Natural killer cell (primary cell): ENCODE measurements at regions of chr13 and their contacts with region 1.

Region 1: DNA sequence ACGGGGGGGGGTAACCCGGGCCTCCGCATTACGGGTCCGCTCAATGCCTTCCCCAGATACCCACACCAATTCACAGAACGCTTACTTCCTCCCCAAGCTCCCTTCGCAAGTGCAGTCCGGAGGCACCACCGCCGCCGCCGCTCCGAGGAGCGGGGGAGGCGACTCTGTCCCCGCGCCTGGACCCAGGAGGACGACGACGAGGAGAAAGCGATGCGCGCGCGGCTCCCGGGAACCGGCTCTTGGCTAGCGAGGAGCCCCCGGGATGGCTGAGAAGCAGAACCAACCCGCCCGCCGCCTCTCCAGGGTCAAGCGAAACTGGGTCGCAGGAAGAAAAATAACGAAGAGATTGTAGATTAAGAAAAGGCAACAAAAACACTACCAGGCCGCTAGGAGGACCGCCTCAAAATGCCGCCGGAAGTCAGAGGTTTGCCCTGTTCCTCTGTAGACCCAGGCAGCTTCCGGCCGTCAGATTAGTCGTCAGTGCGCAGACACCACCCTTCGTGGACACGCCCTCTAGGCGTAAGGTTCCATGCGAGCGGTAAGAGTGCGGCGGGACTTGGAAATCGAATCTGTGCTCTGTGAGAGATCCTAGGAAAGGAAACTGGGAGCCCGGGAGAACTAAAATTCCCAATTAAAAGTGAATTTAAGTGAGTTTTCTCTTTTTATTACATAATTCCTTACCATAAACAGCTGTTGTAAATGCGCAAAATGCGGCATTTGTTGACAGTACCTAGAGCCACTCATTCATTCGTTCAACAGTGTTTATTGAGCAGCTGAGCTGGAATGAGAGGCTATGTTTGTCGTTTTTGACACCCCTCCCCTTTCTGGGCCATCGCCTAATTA is at the start of gene ZC3H13:
- DNase-seq: peak; percentile 85 to 97
- ATAC-seq: peak; percentile 96 to 100 (median 98)
- H3K4me3 ChIP-seq: peak within 1 kb of the TSS; percentile 94
- H3K4me3 Mint-ChIP-seq: peak within 1 kb of the TSS; percentile 87
- H3K27ac ChIP-seq: peak within 1 kb of the TSS; percentile 97
- H3K27ac Mint-ChIP-seq: peak within 1 kb of the TSS; percentile 97 to 98
- H3K4me1 ChIP-seq: peaks cover 4% of the 10 kb centered on the region
- H3K4me1 Mint-ChIP-seq: peaks cover 21 to 24% of the 10 kb centered on the region in 2 donors
- H3K27me3 ChIP-seq: peaks cover 5% of the 10 kb centered on the region
- H3K27me3 Mint-ChIP-seq: peaks cover 28 to 50% of the 10 kb centered on the region in 2 donors
- CTCF ChIP-seq: peak; percentile 41
- total RNA-seq, gene ZC3H13: 54.3 to 75.3 (median 65.8) TPM

Region 2: DNA sequence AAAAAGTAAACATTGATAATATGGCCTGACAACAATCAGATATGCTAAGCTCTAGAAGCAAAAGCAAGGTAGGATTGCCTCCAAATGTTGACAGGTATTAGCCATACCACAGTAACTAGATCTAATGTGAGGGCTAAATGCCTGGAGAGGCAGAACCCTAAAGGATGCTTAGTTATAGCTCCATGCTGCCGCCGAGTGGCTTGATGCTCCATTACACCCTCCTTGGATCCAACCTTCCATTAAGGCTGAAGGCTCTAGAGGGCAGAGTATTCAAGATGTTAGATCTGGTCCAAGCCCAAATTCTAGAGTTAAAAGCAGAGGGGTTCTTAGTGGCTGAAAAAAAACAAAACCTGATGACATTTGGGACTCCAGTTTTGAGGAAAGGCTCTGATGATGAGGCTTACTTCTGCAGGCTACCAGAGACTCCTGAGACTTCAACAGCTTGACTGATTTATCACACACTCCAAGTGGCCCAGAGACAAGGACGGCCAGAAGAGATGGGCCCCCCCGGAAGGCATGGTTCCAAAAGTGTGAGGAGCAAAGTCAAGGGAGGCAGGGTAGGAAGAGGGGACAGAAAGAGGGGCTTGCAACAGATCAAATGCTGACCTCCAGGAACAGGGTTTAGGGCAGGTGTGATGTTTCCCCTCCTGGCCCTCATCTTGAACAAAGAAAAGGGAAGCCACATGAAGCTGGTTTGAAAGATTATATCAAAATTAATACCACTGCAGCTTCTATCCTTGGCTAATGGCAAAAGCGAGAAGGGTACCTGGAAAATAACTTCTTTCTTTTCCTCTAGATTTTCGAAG is 74.2 kb after region 1 on chr13:
- intact Hi-C with region 1: loop called (anchors 1 kb)
- DNase-seq: peak; percentile 62 to 86
- ATAC-seq: peak; percentile 89 to 92 (median 91)
- H3K4me3 ChIP-seq: no peak overlapping the region
- H3K4me3 Mint-ChIP-seq: no peak overlapping the region
- H3K27ac ChIP-seq: peak overlapping the region; percentile 21
- H3K27ac Mint-ChIP-seq: peak overlapping the region; percentile 88 to 90
- H3K4me1 ChIP-seq: peaks cover 9% of the 10 kb centered on the region
- H3K4me1 Mint-ChIP-seq: peaks cover 51 to 55% of the 10 kb centered on the region in 2 donors
- H3K27me3 ChIP-seq: no peaks in the 10 kb centered on the region
- H3K27me3 Mint-ChIP-seq: no peaks in the 10 kb centered on the region
- CTCF ChIP-seq: peak; percentile 69

Region 3: DNA sequence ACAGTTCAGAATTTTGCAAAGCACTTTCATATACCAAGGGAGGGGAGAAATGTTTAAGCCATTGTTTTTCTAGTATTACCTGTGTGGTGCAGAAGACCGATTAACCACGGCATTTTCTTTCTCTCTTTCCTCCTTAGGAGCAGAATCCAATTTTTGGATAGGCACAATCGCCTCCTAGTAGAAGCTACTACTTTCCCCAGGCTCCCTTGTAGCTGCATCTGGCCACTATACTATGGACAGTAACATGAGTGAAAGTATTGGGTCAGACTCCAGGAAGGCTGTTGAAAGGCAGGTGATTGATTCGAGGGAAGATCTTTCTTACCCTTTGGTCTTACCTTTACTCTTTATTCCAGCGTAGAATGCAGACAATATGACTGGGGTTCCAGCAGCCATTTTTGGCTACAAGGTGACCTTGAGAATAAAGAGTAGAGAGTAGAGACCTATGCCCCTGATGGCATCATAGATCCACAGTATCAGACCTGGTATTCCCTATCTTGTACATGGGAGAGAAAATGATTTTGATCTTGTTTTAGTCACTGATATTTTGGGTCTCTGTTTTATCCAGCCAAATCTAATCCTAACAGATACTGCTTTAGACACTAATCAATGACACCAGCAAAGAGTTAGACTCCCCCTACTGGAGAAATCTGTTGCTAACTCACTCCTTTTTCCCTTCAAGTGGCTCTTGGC is 236.2 kb after region 1 on chr13:
- intact Hi-C with region 1: loop called (anchors 10 kb)
- DNase-seq: peak in 1 of 2 donors; percentile 80
- ATAC-seq: peak; percentile 72 to 87 (median 81)
- H3K4me3 ChIP-seq: no peak overlapping the region
- H3K4me3 Mint-ChIP-seq: no peak overlapping the region
- H3K27ac ChIP-seq: no peak overlapping the region
- H3K27ac Mint-ChIP-seq: no peak overlapping the region
- H3K4me1 ChIP-seq: no peaks in the 10 kb centered on the region
- H3K4me1 Mint-ChIP-seq: peaks cover 0 to 7% of the 10 kb centered on the region in 2 donors
- H3K27me3 ChIP-seq: no peaks in the 10 kb centered on the region
- H3K27me3 Mint-ChIP-seq: no peaks in the 10 kb centered on the region
- CTCF ChIP-seq: peak; percentile 84